ENCODE measurements at regions of chr5 and their contacts with region 1.

Region 1: GRCh38 chr5:98928873-98929696 is at the start of gene CHD1:
- DNase-seq: peak; percentile 93 to 98 (median 95)
- H3K4me3 ChIP-seq: peak within 1 kb of the TSS; percentile 62
- H3K27ac ChIP-seq: peak within 1 kb of the TSS; percentile 100
- H3K4me1 ChIP-seq: peaks cover 2% of the 10 kb centered on the region
- H3K27me3 ChIP-seq: no peaks in the 10 kb centered on the region
- CTCF ChIP-seq: peak in 1 of 3 donors; percentile 9
- EP300 ChIP-seq: peak; percentile 92
- POLR2A ChIP-seq: peak; percentile 97
- total RNA-seq, gene CHD1: 35.4 to 75.8 (median 48.7) TPM

Region 2: GRCh38 chr5:98231089-98231488 is 698.0 kb before region 1 on chr5:
- intact Hi-C with region 1: no loop called
- DNase-seq: no peak
- H3K4me3 ChIP-seq: no peak overlapping the region
- H3K27ac ChIP-seq: no peak overlapping the region
- H3K4me1 ChIP-seq: no peaks in the 10 kb centered on the region
- H3K27me3 ChIP-seq: no peaks in the 10 kb centered on the region
- CTCF ChIP-seq: no peak
- EP300 ChIP-seq: no peak
- POLR2A ChIP-seq: no peak

Region 3: GRCh38 chr5:98773464-98774191 is 155.5 kb before region 1 on chr5 and contains the start of gene RGMB:
- intact Hi-C with region 1: loop called in 2 of 4 experiments (anchors 2 to 5 kb)
- DNase-seq: peak; percentile 97 to 99 (median 98)
- H3K4me3 ChIP-seq: peak within 1 kb of the TSS; percentile 90
- H3K27ac ChIP-seq: peak within 1 kb of the TSS; percentile 88 to 94
- H3K4me1 ChIP-seq: peaks cover 6% of the 10 kb centered on the region
- H3K27me3 ChIP-seq: no peaks in the 10 kb centered on the region
- CTCF ChIP-seq: no peak
- EP300 ChIP-seq: no peak
- POLR2A ChIP-seq: peak; percentile 74
- total RNA-seq, gene RGMB: 17.3 to 40.3 (median 26.4) TPM

Measured in ovary (tissue), 10 donors.